ENCODE measurements at regions of chr16 and their contacts with region 1.

Region 1: DNA sequence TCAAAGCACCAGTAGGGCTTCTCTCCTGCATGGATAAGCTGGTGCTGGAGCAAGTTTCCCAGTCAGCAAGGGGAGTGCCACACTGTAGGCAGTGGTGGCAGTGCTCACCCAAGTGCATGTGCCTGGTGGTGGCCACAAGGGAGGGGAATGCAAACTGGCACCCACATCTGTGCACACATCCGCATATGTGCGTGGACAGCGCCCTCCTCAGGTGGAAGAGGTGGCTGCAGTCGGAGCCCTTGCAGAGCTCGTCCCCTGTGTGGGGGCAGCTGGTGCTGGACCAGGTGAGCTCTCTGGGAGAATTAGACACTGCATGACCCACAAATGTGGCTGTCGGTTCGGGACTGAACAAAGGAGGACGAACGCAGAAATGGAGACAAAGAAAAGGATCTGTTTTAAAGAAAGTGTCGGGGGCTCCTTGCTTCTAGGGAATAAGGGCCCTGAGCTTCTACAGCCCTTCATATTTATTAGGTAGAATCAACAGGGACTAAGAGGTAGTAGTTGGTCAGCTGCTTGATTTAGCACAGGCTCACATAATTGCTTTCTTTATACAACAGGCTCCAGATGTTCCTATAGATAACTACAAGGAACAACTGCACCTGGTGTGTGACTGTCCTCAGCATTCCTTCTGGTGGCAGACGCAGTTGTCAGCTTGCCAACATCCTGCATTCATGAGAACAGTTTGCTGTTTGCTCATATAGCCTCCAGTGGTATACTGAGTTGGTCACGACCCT is 5.3 kb upstream of the ZNF689 start:
- DNase-seq: peak; percentile 36 to 78 (median 66)
- ATAC-seq: peak; percentile 90
- H3K4me3 ChIP-seq: no peak overlapping the region
- H3K4me3 Mint-ChIP-seq: no peak overlapping the region
- H3K27ac ChIP-seq: no peak overlapping the region
- H3K27ac Mint-ChIP-seq: no peak overlapping the region
- H3K4me1 ChIP-seq: no peaks in the 10 kb centered on the region
- H3K4me1 Mint-ChIP-seq: peaks cover 1% of the 10 kb centered on the region
- H3K27me3 ChIP-seq: peaks cover 0 to 2% of the 10 kb centered on the region in 2 experiments
- H3K27me3 Mint-ChIP-seq: no peaks in the 10 kb centered on the region
- CTCF ChIP-seq: peak; percentile 50

Region 2: GRCh38 chr16:30602616-30603277 is 12.8 kb before region 1 on chr16:
- CTCF ChIA-PET with region 1: interaction called, 28 read pairs
- POLR2A ChIA-PET with region 1: no interaction called
- intact Hi-C with region 1: no loop called
- DNase-seq: no peak
- ATAC-seq: no peak
- H3K4me3 ChIP-seq: no peak overlapping the region
- H3K4me3 Mint-ChIP-seq: no peak overlapping the region
- H3K27ac ChIP-seq: no peak overlapping the region
- H3K27ac Mint-ChIP-seq: peak overlapping the region; percentile 52
- H3K4me1 ChIP-seq: no peaks in the 10 kb centered on the region
- H3K4me1 Mint-ChIP-seq: peaks cover 4% of the 10 kb centered on the region
- H3K27me3 ChIP-seq: no peaks in the 10 kb centered on the region
- H3K27me3 Mint-ChIP-seq: no peaks in the 10 kb centered on the region
- CTCF ChIP-seq: no peak

Region 3: GRCh38 chr16:30927789-30928378 is 312.4 kb after region 1 on chr16:
- CTCF ChIA-PET with region 1: no interaction called
- POLR2A ChIA-PET with region 1: no interaction called
- intact Hi-C with region 1: no loop called
- DNase-seq: peak in 3 of 9 experiments; percentile 32 to 66 (median 56)
- ATAC-seq: no peak
- H3K4me3 ChIP-seq: no peak overlapping the region
- H3K4me3 Mint-ChIP-seq: no peak overlapping the region
- H3K27ac ChIP-seq: no peak overlapping the region
- H3K27ac Mint-ChIP-seq: peak overlapping the region; percentile 32
- H3K4me1 ChIP-seq: peaks cover 7% of the 10 kb centered on the region
- H3K4me1 Mint-ChIP-seq: peaks cover 14% of the 10 kb centered on the region
- H3K27me3 ChIP-seq: no peaks in the 10 kb centered on the region
- H3K27me3 Mint-ChIP-seq: no peaks in the 10 kb centered on the region
- CTCF ChIP-seq: no peak

Measured in CD8-positive, alpha-beta T cell (primary cell).